Lower leg skin (tissue), 4 donors: ENCODE measurements at regions of chr9 and their contacts with region 1.

Region 1: DNA sequence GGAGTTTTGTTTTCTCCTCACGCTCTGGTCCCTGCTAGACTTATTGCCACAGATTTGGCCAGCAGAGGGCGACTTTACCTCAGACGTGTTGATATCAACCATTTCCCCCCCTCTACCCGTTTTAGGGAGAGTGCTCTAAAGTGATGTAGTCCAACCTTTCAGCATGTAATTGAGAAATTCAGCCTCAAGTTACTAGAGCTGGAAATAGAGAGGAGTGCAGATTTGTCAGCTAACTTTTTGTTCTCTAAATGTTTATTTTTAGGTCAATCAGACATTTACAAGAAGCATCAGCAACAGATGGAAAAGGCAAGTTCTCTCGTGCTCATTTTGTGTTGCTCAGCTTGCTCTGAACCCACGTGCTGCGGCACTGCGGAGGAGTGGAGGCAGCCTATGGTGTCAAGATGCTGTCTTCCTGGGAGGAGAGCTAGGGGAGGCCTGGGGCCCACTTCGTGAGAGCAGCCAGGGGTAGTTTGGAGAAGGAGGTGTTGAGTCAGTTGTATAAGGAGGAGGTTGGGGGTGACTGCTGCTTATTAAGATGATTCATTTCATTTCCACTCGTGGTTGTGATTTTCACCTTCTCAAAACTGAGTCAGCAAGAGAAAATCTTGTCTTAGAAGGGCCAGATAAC is 53.6 kb downstream of the GPR107 start:
- DNase-seq: peak; percentile 82 to 94
- H3K4me3 ChIP-seq: no peak overlapping the region
- CTCF ChIP-seq: peak in 1 of 3 donors; percentile 62
- POLR2A ChIP-seq: no peak

Region 2: GRCh38 chr9:129884220-129885017 is 222.9 kb before region 1 on chr9:
- intact Hi-C with region 1: loop called (anchors 10 kb)
- DNase-seq: peak; percentile 89 to 98
- H3K4me3 ChIP-seq: no peak overlapping the region
- CTCF ChIP-seq: no peak
- POLR2A ChIP-seq: no peak

Region 3: DNA sequence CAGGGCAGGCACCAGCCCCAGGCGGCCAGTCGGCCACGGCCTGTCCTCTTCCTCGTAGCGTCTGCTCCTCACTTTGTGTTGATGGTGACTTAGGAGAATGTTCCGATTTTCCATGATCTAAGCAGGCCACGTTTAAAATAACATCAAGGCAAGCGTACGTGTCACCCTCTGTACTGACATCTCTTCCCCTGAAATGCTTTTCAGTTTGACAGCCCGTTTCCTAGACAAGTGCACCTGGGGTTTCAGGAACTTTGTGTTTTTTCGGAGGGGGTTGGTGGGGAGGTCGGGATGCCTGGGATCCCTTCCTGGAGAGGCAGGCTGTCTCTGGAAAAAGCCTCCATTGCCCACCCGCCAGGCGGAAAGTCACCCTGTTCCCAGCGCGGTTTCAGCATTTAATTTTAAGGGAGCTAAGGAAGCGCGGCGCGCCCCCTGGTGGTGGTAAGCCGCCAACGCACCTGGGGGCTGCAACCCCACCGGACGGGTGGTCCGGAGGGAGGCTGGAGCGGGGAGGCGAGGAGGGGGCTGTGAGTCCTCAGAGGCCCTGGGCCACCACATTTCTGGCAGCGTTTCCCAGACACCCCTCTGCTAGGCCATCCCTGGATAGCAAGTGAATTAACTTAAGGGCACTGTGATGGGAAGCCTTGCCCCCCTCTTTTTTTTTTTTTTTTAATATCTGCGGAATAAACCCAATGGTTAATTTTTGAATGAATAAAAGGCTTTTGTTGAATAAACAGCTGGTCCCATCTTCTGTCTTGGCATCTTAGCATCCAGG is 128.7 kb after region 1 on chr9:
- intact Hi-C with region 1: loop called (anchors 5 kb)
- DNase-seq: peak; percentile 49 to 95
- H3K4me3 ChIP-seq: no peak overlapping the region
- CTCF ChIP-seq: peak in 1 of 3 donors; percentile 90
- POLR2A ChIP-seq: no peak

Region 4: GRCh38 chr9:130343445-130343918 is 236.1 kb after region 1 on chr9:
- intact Hi-C with region 1: loop called (anchors 10 kb)
- DNase-seq: no peak
- H3K4me3 ChIP-seq: no peak overlapping the region
- CTCF ChIP-seq: no peak
- POLR2A ChIP-seq: no peak

Region 5: DNA sequence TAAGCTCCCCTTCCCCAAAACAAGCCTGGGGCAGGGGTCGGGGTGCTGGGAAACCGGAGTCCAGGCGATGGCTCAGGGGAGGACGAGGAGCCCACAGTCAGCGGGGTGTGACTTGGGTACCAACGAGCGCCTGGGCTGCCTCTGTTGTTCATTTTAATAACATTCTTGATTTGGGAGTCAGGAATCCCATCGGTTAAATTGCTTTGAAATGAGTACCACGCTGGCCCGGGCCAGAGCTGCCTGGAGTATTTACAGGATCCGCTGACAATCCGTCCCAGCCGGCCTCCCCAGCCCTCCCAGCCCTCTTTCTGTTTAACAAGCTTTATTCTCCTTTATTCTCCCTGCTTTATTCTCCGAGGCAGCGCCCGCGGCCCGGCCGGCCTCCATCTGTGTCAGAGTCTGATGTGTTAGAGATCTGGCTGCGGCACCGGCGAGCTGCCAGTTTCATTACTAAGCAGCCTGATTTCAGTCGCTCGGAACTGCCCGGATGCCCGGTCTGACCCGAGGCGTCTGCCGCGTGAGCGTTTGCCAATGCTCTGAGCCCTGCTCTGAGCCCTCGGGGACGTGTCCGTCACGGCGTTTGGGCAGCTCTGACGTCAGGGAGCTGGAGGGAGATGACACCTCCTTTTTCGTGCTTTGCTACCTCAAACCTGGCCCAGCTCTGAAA is 805.7 kb after region 1 on chr9:
- intact Hi-C with region 1: no loop called
- DNase-seq: no peak
- H3K4me3 ChIP-seq: no peak overlapping the region
- CTCF ChIP-seq: no peak
- POLR2A ChIP-seq: no peak

Region 6: GRCh38 chr9:131124824-131125127 is 1017.4 kb after region 1 on chr9:
- intact Hi-C with region 1: loop called (anchors 5 kb)
- DNase-seq: no peak
- H3K4me3 ChIP-seq: peak overlapping the region; percentile 100
- CTCF ChIP-seq: no peak
- POLR2A ChIP-seq: no peak